AG04450 (cell line): ENCODE measurements at regions of chr10 and their contacts with region 1.

Region 1: DNA sequence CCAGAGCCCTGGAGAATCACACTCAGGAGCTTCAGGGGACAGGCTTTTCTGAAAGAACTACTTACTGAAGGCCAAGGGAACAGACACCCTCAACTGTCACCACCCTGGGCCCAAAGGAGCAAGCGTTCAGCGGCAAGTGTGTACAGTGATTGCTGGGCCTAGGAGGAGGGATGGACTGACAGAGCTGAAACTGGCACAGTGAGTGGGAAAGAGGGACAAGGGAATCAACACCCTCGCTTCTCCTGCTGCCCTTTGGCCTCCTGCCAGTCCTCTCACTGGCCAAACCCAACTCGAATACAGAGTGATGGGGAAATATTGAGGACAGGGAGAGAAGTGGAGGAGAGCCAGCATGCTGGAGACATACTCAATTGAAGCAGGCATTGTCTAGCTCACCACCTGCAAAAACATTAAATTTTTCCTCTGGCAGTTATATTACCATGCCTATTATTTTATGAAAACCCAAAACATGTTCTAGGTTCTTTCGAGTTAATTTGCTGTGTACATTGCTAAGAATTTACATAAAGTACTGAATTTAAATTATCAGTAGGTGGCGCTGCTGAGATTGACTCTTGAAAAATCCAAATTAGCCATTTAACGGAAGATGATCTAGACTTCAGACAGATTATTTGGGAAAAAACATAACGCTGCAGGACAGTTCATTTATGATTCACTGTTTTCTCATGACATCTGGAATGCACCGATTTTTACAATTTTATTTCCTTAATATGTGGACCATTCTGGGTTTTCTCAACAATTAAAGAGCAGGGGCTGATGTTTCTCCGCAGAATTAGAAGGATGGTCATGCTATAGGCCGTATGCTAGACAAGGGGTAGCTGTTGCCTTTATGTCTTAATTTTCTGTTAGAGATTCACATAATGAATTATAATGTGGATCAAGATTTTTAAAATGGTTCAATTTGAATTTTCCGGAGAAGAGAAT is 14.7 kb upstream of the TMEM236 start:
- DNase-seq: peak; percentile 4
- H3K4me3 ChIP-seq: no peak overlapping the region
- H3K27ac ChIP-seq: no peak overlapping the region
- H3K27me3 ChIP-seq: no peaks in the 10 kb centered on the region
- CTCF ChIP-seq: peak; percentile 61

Region 2: DNA sequence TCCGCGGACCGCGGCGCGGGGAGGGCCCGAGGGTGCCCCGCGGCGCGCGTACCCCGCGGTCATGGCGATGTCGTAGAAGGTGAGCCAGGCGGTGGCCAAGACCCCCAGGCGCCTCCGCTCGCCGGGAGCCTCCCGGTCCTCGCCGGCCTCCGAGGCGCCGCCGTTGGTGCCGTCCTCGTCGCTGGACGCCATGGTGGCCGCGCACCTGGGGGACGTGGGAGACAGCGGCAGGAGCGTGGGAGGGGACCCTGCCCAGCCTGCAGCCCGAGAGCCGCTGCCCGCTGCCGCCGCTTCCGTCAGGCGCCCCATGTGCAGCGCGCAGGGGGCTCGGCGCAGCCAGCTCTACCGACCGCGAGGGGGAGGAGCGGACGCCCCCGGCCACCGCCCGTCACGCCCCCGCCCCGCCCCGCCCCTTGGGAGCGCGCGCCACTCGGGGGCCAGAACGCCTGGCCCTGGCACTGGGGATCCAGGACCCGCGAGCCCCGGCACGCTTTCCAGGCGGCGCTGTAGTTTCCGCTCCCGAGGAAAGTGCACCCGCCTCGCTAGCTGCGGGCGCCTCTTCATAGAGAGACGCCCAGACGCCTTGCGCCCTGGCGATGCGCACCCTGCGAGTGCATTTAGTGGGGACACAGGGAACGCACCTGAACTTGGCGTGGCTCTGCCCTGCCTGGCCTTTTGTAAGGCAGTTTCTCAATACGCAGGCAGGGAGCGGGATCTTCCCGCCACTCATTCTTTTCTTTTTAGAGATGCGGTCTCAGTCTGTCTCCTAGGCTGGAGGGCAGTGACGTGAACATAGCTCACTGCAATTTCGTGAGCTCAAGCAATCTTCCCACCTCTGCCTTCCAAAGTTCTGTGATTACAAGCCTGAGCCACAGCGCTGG is 120.0 kb before region 1 on chr10 and contains the start of gene HACD1:
- CTCF ChIA-PET with region 1: interaction called, 13 read pairs
- POLR2A ChIA-PET with region 1: no interaction called
- DNase-seq: peak; percentile 8
- H3K4me3 ChIP-seq: peak within 1 kb of the TSS; percentile 79
- H3K27ac ChIP-seq: peak within 1 kb of the TSS; percentile 31
- H3K27me3 ChIP-seq: no peaks in the 10 kb centered on the region
- CTCF ChIP-seq: peak; percentile 37; the same call in 1 of the 2 replicates
- polyA plus RNA-seq, gene HACD1: 42.0 and 53.7 TPM in 2 replicates

Region 3: GRCh38 chr10:17747883-17748550 is 10.7 kb after region 1 on chr10:
- CTCF ChIA-PET with region 1: interaction called, 16 read pairs
- POLR2A ChIA-PET with region 1: no interaction called
- DNase-seq: no peak
- H3K4me3 ChIP-seq: no peak overlapping the region
- H3K27ac ChIP-seq: no peak overlapping the region
- H3K27me3 ChIP-seq: no peaks in the 10 kb centered on the region
- CTCF ChIP-seq: no peak